Mammary epithelial cell (primary cell): ENCODE measurements at regions of chr2 and their contacts with region 1.

Region 1: DNA sequence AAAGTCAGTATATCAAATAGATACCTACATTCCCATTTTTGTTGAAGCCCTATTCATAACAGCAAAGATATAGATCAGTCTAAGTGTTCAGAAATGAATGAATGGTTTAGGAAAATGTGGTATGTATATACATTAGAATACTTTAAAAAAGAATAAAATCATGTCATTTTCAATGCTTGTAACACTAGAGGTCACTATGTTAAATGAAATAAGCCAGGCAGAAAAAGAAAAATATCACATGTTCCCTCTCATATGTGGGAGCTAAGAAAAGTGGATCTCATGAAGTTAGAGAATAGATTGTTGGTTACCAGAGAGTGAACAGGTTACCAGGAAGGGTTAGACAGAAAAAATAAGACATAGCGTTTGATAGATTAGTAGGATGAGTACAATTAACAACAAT is 1111.0 kb upstream of the SLC39A10 start:
- DNase-seq: no peak
- H3K4me3 ChIP-seq: no peak overlapping the region
- H3K27ac ChIP-seq: no peak overlapping the region
- H3K4me1 ChIP-seq: no peaks in the 10 kb centered on the region
- H3K27me3 ChIP-seq: no peaks in the 10 kb centered on the region
- CTCF ChIP-seq: peak in 1 of 2 donors; percentile 30

Region 2: DNA sequence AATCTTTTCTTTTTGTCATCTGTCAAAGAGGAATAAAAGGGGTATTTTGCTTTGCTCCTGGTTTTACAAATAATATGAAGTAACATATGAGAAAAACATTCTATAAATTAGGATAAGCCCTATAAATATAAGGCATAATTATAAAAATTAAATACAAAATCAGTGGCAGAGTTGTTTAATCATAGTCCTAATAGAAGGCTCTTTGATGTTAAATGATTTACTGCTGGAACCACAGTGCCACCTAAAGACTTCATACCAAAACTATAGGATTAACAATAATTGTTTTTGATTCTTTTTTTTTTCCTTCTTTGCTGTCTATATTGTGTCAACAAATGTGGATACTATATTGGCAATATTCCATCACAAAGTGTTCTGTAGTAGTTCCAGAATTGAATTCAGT is 273.4 kb after region 1 on chr2:
- CTCF ChIA-PET with region 1: interaction called, 4 read pairs
- dilution Hi-C with region 1: no loop called
- in situ Hi-C with region 1: no loop called
- intact Hi-C with region 1: loop called (anchors 1 kb)
- DNase-seq: peak; percentile 6
- H3K4me3 ChIP-seq: no peak overlapping the region
- H3K27ac ChIP-seq: no peak overlapping the region
- H3K4me1 ChIP-seq: peaks cover 13% of the 10 kb centered on the region
- H3K27me3 ChIP-seq: no peaks in the 10 kb centered on the region
- CTCF ChIP-seq: peak; percentile 13 to 49

Region 3: GRCh38 chr2:194867328-194867727 is 321.4 kb after region 1 on chr2:
- CTCF ChIA-PET with region 1: no interaction called
- dilution Hi-C with region 1: no loop called
- in situ Hi-C with region 1: no loop called
- intact Hi-C with region 1: loop called (anchors 2 kb)
- DNase-seq: peak; percentile 8
- H3K4me3 ChIP-seq: no peak overlapping the region
- H3K27ac ChIP-seq: no peak overlapping the region
- H3K4me1 ChIP-seq: no peaks in the 10 kb centered on the region
- H3K27me3 ChIP-seq: no peaks in the 10 kb centered on the region
- CTCF ChIP-seq: peak; percentile 44 to 62

Region 4: DNA sequence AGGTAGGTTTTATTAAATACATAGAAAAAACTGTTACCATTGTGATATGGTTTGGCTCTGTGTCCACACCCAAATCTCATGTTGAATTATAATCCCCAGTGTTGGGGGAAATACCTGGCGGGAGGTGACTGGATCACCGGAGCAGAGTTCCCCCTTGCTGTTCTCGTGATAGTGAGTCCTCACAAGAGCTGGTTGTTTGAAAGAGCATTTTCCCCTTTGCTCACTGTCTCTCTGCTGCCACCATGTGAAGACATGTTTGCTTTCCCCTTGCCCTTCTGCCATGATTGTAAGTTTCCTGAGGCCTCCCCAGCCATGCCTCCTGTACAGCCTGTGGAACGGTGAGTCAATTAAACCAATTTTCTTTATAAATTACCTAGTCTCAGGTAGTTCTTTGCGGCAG is 758.3 kb after region 1 on chr2:
- CTCF ChIA-PET with region 1: no interaction called
- dilution Hi-C with region 1: no loop called
- in situ Hi-C with region 1: loop called (anchors 25 kb)
- intact Hi-C with region 1: loop called (anchors 5 kb)
- DNase-seq: peak; percentile 15
- H3K4me3 ChIP-seq: no peak overlapping the region
- H3K27ac ChIP-seq: no peak overlapping the region
- H3K4me1 ChIP-seq: no peaks in the 10 kb centered on the region
- H3K27me3 ChIP-seq: no peaks in the 10 kb centered on the region
- CTCF ChIP-seq: peak; percentile 10 to 59